Right cardiac atrium (tissue), 5 donors: ENCODE measurements at regions of chr18 and their contacts with region 1.

Region 1: DNA sequence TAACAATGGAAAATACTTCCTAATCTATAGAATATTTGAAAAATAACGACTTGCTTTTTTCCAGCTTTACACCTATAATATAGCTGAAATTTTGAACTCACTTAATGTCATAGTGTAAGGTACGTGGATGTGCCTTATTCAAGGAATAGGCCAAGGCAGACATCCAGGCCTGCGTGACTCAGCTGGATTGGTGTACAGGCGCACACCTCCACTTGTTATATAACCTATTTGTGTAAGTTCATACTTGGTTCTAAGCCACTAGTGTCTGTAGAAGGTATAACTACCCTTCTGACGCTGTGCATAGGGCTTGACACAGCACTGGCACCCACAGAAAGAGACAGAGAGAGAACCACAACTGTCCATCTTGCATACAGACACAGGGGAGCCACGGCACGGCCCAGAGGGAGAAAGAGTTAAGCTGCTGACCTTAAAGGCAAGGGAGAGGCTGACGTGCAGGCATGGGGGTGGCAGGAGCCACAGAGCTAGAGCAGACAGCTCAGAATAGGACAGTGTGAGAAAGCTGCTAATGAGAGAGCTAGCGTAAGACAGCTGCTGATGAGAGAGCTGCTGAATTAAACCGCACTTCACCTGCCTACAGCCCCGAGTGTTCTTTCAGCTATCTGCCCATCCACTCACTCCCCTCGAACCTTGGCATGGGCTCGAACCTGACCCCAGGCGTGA is 16.1 kb downstream of the CCDC178 start:
- DNase-seq: peak in 1 of 3 donors; percentile 18
- ATAC-seq: peak; percentile 66 to 80
- H3K4me3 ChIP-seq: no peak overlapping the region
- H3K27ac ChIP-seq: no peak overlapping the region
- H3K4me1 ChIP-seq: no peaks in the 10 kb centered on the region
- H3K27me3 ChIP-seq: no peaks in the 10 kb centered on the region

Region 2: DNA sequence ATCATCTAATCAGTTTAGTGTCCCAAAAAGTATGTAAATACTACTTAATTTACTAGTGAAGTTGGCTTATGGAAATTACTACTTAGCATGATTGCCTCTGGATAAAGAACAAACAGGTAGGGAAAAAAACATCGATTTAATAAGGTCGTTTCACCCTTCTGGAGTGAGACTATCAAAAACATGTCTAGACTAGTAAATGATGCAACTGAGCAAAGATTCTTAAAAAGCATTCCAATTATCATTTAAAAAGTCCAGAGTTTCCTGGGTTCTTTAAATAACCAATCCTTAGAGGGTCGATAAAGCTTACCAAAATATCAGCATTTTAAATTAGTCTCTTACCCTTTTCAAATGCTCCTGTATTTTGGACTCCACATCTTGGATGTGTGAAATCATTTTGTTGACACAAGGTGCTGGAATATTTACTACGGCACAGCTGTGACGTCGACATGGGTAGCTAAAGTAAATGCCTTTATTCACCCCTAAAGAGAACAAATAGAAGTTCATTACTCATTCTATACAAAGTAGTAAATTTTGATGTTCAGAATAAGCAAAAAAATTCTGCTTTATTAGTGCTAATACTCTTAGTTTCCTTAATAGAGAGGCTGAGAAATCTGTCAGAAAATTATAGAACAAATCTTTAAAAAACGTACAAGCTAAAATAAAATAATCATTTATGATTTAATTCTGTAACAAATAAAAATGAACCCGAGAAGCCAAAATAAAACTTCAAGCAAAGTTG is 54.5 kb before region 1 on chr18:
- intact Hi-C with region 1: loop called in 1 of 4 experiments (anchors 10 kb)
- DNase-seq: no peak
- ATAC-seq: no peak
- H3K4me3 ChIP-seq: no peak overlapping the region
- H3K27ac ChIP-seq: no peak overlapping the region
- H3K4me1 ChIP-seq: no peaks in the 10 kb centered on the region
- H3K27me3 ChIP-seq: no peaks in the 10 kb centered on the region